Activated CD8-positive, alpha-beta T cell treated with anti-CD3 and anti-CD28 coated beads for 36 hours (primary cell): ENCODE measurements at regions of chr5 and their contacts with region 1.

Region 1: GRCh38 chr5:58886315-58887207 is 303.7 kb downstream of the RAB3C start:
- DNase-seq: peak; percentile 68
- ATAC-seq: peak; percentile 75
- H3K4me3 Mint-ChIP-seq: no peak overlapping the region
- H3K27ac Mint-ChIP-seq: no peak overlapping the region
- H3K4me1 Mint-ChIP-seq: peaks cover 20% of the 10 kb centered on the region
- H3K27me3 Mint-ChIP-seq: peaks cover 5% of the 10 kb centered on the region
- CTCF ChIP-seq: peak; percentile 92

Region 2: GRCh38 chr5:58653521-58653920 is 233.0 kb before region 1 on chr5:
- CTCF ChIA-PET with region 1: no interaction called
- POLR2A ChIA-PET with region 1: no interaction called
- intact Hi-C with region 1: no loop called
- DNase-seq: no peak
- ATAC-seq: no peak
- H3K4me3 Mint-ChIP-seq: no peak overlapping the region
- H3K27ac Mint-ChIP-seq: no peak overlapping the region
- H3K4me1 Mint-ChIP-seq: no peaks in the 10 kb centered on the region
- H3K27me3 Mint-ChIP-seq: peaks cover 2% of the 10 kb centered on the region
- CTCF ChIP-seq: no peak

Region 3: DNA sequence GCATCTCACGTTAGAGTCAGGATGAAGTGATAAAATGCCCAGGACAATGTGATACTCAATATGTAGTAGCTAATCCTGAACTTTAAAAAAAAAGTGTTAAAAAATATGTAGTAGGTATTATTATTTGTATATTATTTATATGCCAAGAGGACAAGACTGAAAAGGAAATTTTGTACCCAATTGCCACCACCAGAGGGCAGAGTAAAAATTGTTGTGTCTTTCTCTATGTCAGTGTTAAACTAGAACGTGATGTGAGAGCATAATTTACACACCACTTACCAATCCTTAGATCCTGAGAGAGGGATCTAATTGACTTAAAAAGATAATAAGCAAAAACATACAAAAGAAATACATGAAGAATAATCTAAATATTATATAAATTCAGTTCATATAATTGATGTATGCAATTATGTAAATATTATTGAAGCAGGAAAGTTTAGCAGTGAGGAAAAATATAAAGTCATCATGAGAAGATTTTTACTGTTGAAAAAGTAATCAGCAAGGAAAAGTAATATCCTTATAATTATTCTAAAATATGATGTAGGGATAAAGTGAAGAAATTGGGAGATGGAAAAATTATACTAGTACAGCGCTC is 14.8 kb before region 1 on chr5:
- CTCF ChIA-PET with region 1: interaction called, 57 read pairs
- POLR2A ChIA-PET with region 1: interaction called, 3 read pairs
- intact Hi-C with region 1: no loop called
- DNase-seq: peak; percentile 45
- ATAC-seq: peak; percentile 53
- H3K4me3 Mint-ChIP-seq: no peak overlapping the region
- H3K27ac Mint-ChIP-seq: no peak overlapping the region
- H3K4me1 Mint-ChIP-seq: no peaks in the 10 kb centered on the region
- H3K27me3 Mint-ChIP-seq: peaks cover 11% of the 10 kb centered on the region
- CTCF ChIP-seq: peak; percentile 84

Region 4: GRCh38 chr5:58944221-58944620 is 57.7 kb after region 1 on chr5:
- CTCF ChIA-PET with region 1: interaction called, 16 read pairs
- POLR2A ChIA-PET with region 1: no interaction called
- intact Hi-C with region 1: no loop called
- DNase-seq: no peak
- ATAC-seq: no peak
- H3K4me3 Mint-ChIP-seq: no peak overlapping the region
- H3K27ac Mint-ChIP-seq: no peak overlapping the region
- H3K4me1 Mint-ChIP-seq: no peaks in the 10 kb centered on the region
- H3K27me3 Mint-ChIP-seq: peaks cover 9% of the 10 kb centered on the region
- CTCF ChIP-seq: no peak

Region 5: GRCh38 chr5:59007460-59008063 is 121.0 kb after region 1 on chr5:
- CTCF ChIA-PET with region 1: interaction called, 22 read pairs
- POLR2A ChIA-PET with region 1: no interaction called
- intact Hi-C with region 1: loop called (anchors 5 kb)
- DNase-seq: no peak
- ATAC-seq: no peak
- H3K4me3 Mint-ChIP-seq: no peak overlapping the region
- H3K27ac Mint-ChIP-seq: no peak overlapping the region
- H3K4me1 Mint-ChIP-seq: peaks cover 64% of the 10 kb centered on the region
- H3K27me3 Mint-ChIP-seq: no peaks in the 10 kb centered on the region
- CTCF ChIP-seq: peak; percentile 28

Region 6: DNA sequence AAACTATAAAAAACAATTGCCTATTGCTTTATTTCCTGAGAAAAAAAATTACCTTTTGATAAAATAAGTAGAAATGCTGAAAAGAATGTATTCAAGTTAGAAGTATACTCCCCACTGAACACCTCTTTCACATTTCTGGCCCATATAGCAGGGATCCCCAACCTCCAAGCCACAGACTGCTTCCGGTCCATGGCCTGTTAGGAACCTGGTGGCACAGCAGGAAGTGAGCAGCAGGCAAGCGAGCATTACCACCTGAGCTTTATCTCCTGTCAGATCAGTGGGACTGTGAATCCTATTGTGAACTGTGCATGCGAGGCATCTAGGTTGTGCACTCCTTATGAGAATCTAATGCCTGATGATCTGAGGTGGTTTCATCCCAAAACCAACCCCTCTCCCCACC is 260.2 kb after region 1 on chr5:
- CTCF ChIA-PET with region 1: no interaction called
- POLR2A ChIA-PET with region 1: no interaction called
- intact Hi-C with region 1: no loop called
- DNase-seq: peak; percentile 27
- ATAC-seq: peak; percentile 50
- H3K4me3 Mint-ChIP-seq: no peak overlapping the region
- H3K27ac Mint-ChIP-seq: no peak overlapping the region
- H3K4me1 Mint-ChIP-seq: peaks cover 16% of the 10 kb centered on the region
- H3K27me3 Mint-ChIP-seq: no peaks in the 10 kb centered on the region
- CTCF ChIP-seq: no peak

Region 7: DNA sequence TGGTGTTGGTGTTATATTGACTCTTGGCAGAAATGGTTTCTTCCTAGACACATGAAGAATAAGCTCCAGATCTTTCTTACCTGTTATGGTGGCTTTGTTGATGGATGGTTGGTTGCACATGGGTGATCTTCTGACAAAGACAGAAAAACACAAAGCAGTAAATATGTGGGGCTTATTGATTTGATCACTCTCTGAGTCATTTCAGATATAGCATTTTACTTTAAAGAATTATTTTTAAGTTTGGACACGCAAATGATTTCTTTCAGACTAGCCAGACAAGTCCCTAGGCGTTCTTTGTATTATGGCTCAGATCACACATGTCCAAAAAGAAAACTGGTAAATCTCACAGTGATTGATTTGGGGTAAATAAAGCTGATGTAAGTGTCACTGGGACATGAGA is 294.0 kb after region 1 on chr5:
- CTCF ChIA-PET with region 1: interaction called, 68 read pairs
- POLR2A ChIA-PET with region 1: interaction called, 5 read pairs
- intact Hi-C with region 1: loop called (anchors 2 kb)
- DNase-seq: no peak
- ATAC-seq: no peak
- H3K4me3 Mint-ChIP-seq: no peak overlapping the region
- H3K27ac Mint-ChIP-seq: no peak overlapping the region
- H3K4me1 Mint-ChIP-seq: peaks cover 6% of the 10 kb centered on the region
- H3K27me3 Mint-ChIP-seq: peaks cover 3% of the 10 kb centered on the region
- CTCF ChIP-seq: no peak

Region 8: DNA sequence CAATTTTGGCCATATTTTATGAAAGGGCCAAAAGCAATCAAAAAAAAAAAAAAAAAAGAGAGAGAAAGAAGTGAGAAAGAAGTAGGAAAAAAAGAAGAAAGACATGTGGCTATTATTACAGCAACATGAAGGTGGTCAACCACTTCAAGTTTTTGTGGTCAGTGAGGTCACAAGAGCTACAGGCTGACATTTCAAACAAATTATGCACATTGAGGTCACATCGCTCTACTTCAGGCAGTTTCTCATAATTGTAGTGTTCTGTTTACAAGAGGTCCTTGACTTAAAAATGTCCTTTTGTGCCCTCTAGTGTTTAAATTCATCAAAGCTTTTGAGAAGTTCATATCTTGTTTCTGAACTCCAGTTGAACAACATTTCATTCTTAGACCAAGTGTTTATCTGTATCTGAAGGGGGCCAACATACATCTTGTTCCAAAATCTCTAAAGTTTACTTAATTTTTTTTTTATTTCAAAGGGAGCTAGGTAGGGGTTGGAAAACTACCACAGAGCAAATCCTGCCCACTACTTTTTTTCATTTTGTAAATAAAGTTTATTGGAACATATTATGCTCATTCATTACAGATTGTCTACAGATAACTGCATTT is 493.9 kb after region 1 on chr5:
- CTCF ChIA-PET with region 1: interaction called, 6 read pairs
- POLR2A ChIA-PET with region 1: no interaction called
- intact Hi-C with region 1: loop called (anchors 10 kb)
- DNase-seq: peak; percentile 69
- ATAC-seq: peak; percentile 89
- H3K4me3 Mint-ChIP-seq: no peak overlapping the region
- H3K27ac Mint-ChIP-seq: no peak overlapping the region
- H3K4me1 Mint-ChIP-seq: peaks cover 4% of the 10 kb centered on the region
- H3K27me3 Mint-ChIP-seq: peaks cover 4% of the 10 kb centered on the region
- CTCF ChIP-seq: peak; percentile 72